AG04450 (cell line): ENCODE measurements at regions of chr14 and their contacts with region 1.

Region 1: DNA sequence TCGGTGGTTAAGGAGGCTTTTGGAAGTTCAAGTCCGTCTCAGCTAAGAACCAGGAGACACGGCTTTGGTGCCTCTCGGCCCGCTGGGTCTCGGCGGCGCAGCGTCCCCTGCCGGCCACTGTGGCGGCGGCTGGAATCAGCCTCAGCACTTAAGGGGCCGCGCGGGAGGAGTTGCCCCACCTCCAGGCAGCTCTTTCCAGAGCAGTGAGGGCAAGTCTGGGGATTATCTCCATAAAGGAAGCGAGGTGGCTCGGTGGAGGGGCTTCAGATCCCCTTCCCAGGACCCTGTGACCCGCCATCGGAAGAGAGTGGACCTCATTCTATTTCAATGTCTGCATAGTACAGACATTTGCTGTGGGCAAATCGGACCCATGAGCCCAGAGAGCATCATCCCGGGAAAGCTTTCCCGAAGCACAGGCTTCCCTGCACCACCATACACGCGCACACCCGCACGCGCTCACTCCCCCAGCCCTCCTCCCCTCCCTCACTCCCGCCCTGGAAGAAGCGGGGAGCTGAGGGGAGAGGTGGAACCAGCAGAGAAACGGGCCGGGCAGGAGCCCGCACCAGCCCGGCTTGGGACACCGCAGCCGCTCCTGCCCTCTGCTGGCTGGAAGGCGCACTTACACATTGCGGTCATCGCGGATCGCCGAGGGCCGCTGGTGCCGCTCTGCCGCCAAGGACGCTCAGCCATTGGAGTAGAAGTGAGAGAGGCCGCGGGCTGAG is 15.9 kb downstream of the RNASE2 start:
- DNase-seq: peak; percentile 69
- H3K4me3 ChIP-seq: peak overlapping the region; percentile 69
- H3K27ac ChIP-seq: peak overlapping the region; percentile 47
- H3K27me3 ChIP-seq: peaks cover 12% of the 10 kb centered on the region
- CTCF ChIP-seq: peak; percentile 98

Region 2: DNA sequence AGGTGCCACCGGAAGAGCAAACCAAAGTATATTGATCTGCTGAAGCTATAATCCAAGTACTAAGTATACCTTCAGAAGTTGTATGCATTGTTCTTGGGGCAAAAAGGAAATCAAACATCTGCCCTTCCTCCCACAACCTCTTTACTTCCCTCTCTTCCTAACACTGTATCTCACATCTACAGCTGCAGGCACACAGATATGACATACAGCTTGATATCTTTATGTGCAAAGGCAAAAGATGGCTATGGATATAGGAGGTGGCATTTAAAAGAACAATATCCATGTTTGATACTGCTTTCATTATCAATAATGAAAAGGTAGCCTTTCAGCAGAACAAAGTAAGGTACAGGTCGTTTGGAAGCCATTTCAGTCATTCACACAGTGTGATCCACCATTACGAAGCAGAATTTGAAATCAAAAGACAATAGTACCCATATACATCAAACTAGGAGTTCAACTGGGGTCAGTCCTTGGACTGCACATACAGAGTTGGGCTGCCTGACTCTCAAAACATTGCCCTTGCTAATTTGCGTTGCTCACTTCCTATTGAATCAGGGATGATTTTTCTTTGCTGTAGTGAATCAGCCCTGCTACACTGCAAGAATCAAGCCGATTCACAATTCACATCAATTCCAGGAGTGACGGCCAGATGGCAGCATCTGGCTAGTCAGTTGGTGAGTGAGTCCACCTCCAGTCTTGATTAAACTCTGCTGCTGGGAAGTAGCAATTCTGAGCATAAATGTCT is 273.7 kb before region 1 on chr14:
- CTCF ChIA-PET with region 1: interaction called, 43 read pairs
- POLR2A ChIA-PET with region 1: no interaction called
- DNase-seq: no peak
- H3K4me3 ChIP-seq: no peak overlapping the region
- H3K27ac ChIP-seq: no peak overlapping the region
- H3K27me3 ChIP-seq: no peaks in the 10 kb centered on the region
- CTCF ChIP-seq: peak; percentile 78

Region 3: DNA sequence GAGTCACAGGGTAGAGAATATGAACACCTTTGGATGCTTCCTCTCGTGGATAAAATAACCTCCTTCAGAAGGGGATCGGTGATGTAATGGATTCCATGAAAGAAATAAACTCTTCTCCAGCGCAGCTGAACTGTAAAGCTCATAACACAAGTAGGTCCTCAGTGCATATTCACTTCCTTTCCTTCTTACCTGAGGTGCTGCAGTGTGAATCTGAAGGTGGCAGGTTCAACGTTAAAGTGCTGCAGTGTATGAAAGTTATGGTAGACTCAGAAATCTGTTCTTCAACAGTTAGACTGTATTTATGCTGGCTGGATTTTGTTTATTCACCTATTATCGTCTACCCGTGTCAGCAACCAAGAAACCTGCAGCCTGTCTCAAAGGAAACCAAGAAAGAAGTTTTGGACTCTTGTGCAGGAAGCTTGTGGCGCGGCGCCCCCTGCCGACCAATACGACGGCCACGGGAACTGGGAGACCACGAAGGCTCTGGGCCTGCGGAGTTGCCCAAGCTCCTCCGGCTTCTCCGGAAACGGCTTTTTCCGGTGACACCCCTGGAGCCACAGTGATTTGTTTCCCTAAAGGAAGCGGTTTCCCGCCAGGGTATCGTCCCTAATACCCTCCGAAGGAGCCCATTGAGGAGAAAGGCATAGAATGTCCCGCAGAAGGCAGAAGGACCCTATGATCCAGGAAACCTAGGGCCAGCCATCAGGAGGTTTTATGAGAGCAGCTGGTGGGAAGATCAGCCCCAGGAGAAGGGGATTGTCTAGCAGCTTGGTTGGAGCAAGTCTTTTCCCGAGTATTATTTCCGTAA is 97.6 kb before region 1 on chr14:
- CTCF ChIA-PET with region 1: interaction called, 10 read pairs
- POLR2A ChIA-PET with region 1: no interaction called
- DNase-seq: no peak
- H3K4me3 ChIP-seq: no peak overlapping the region
- H3K27ac ChIP-seq: no peak overlapping the region
- H3K27me3 ChIP-seq: no peaks in the 10 kb centered on the region
- CTCF ChIP-seq: peak; percentile 67

Region 4: DNA sequence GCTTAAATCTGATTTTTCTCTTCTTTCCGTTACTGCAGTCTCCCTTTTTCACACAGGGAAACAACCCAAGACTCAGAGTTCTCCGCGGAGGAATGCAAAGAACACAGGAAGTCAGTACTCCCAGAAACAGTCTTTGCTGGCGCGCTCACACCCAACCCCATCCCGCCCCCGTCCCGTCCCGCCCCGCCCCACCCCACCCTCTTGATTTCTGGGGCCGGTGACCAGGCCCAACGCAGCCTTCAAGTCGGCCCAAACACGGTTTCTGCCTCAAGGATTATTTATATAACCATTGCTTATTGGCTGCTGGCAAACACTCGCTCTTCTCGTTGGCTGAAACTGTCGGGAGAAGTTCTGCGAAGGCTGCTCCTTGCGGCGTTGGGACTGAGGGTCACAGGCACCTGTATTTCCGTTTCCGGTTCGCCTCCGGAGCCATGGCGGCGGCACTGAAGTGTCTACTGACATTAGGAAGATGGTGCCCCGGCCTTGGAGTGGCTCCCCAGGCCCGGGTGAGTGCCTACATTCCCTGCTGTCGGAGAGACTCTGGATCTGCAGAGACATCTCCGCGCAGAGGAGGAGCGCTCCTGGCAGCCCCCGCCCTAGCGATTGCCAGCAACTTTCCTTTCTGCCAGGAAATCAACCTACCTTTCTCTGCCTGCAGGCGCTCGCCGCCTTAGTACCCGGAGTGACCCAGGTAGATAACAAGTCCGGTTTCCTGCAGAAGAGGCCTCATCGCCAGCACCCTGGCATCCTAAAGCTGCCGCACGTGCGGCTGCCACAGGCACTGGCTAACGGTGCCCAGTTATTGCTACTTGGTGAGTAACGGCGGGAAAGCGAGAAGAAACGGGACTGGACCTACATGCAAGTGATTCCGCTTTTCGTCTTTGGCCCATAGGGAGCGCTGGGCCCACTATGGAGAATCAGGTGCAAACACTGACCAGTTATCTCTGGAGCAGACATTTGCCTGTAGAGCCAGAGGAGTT is 18.7 kb after region 1 on chr14 and contains the start of gene METTL17:
- CTCF ChIA-PET with region 1: interaction called, 55 read pairs
- POLR2A ChIA-PET with region 1: no interaction called
- DNase-seq: peak; percentile 96
- H3K4me3 ChIP-seq: peak within 1 kb of the TSS; percentile 88
- H3K27ac ChIP-seq: peak within 1 kb of the TSS; percentile 52
- H3K27me3 ChIP-seq: no peaks in the 10 kb centered on the region
- CTCF ChIP-seq: peak; percentile 48
- polyA plus RNA-seq, gene METTL17: 55.3 and 62.7 TPM in 2 replicates

Region 5: GRCh38 chr14:21071225-21072030 is 100.3 kb after region 1 on chr14:
- CTCF ChIA-PET with region 1: interaction called, 28 read pairs
- POLR2A ChIA-PET with region 1: no interaction called
- DNase-seq: peak; percentile 88
- H3K4me3 ChIP-seq: peak overlapping the region; percentile 82
- H3K27ac ChIP-seq: peak overlapping the region; percentile 95
- H3K27me3 ChIP-seq: no peaks in the 10 kb centered on the region
- CTCF ChIP-seq: no peak

Region 6: GRCh38 chr14:22432348-22432976 is 1461.3 kb after region 1 on chr14:
- CTCF ChIA-PET with region 1: no interaction called
- POLR2A ChIA-PET with region 1: no interaction called
- DNase-seq: peak; percentile 74
- H3K4me3 ChIP-seq: no peak overlapping the region
- H3K27ac ChIP-seq: no peak overlapping the region
- H3K27me3 ChIP-seq: peaks cover 36% of the 10 kb centered on the region
- CTCF ChIP-seq: no peak